Ovary (tissue), 10 donors: ENCODE measurements at regions of chr20 and their contacts with region 1.

Region 1: DNA sequence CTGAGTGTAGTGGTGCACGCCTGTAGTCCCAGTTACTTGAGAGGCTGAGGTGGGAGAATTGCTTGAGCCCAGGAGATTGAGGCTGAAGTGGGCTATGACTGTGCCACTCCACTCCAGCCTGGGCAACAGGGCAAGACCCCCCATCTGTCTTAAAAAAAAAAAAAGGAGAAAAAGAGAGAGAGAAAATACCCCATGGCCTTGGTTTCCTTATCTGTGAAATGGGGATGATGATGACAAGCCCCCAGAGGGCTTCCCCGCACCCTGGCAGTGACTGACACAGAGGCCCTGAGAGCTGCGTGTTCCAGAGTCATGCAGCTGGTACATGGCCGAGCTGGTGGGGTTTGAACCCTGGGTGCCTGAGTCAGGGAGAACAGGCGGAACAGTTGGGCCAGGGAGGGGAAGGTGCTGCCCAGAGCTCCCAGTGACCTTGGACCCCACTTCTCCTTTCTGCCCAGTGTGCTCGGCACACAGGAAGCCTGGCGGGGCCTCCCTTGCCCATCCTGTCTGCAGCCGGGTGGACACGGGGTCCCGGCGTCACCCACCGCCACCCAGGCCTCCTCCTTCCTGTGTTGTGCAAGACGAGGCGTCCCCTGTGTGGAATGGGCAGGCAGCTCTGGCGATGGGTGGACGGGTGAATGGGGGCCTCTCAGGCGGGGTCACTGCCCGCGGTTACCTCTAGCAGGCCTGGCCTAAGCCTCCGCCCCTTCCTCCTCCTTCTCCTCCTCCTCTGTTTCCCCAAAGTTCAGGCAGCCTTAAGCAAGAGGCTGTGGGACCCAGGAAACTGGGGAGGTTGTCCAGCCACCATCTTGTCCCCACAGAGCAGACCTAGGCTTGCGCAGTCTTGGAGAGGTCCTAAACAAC is 84.2 kb downstream of the CEBPB start:
- DNase-seq: no peak
- H3K4me3 ChIP-seq: no peak overlapping the region
- H3K27ac ChIP-seq: no peak overlapping the region
- H3K4me1 ChIP-seq: peaks cover 2% of the 10 kb centered on the region
- H3K27me3 ChIP-seq: no peaks in the 10 kb centered on the region
- CTCF ChIP-seq: no peak
- EP300 ChIP-seq: no peak
- POLR2A ChIP-seq: no peak

Region 2: DNA sequence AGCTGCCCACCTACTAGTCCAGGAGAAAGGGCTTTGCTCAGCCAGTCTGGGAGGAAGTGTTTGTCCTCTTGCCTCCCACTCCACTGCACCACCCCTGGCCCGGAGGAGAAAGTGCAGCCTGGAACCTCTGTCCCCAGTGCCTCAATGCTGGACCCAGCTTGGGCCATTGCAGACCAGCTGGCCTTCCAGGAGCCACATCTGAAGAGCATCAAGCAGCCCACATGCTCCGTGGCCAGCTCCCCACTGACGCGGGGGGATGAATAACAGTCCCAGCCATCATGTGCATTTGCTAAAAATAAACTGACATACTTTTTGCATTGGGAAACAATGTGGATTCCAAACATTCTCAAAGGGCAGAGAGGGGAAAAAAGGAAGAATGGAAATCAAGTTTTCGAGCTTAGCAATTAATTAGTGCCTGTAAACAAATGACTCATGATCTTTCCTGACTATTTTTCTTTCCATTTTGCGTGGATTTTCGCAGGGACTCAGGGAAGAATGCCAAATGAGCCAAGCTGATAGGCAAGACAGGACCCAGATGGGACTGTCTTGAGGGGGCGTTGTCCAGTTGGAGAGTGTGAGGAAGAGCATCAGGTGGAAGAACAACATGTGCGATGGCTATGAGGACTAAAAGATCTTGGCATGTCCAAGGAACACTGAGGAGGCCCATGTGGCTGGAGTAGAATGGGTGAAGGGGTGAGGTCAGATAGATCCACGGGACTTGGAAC is 50.1 kb before region 1 on chr20:
- intact Hi-C with region 1: loop called in 1 of 4 experiments (anchors 5 kb)
- DNase-seq: peak; percentile 80 to 91 (median 86)
- H3K4me3 ChIP-seq: no peak overlapping the region
- H3K27ac ChIP-seq: peak overlapping the region; percentile 84 to 89
- H3K4me1 ChIP-seq: peaks cover 11% of the 10 kb centered on the region
- H3K27me3 ChIP-seq: no peaks in the 10 kb centered on the region
- CTCF ChIP-seq: peak; percentile 1 to 51 (median 39)
- EP300 ChIP-seq: peak; percentile 88
- POLR2A ChIP-seq: peak; percentile 33